Heart right ventricle (tissue), 16 donors: ENCODE measurements at regions of chr15 and their contacts with region 1.

Region 1: DNA sequence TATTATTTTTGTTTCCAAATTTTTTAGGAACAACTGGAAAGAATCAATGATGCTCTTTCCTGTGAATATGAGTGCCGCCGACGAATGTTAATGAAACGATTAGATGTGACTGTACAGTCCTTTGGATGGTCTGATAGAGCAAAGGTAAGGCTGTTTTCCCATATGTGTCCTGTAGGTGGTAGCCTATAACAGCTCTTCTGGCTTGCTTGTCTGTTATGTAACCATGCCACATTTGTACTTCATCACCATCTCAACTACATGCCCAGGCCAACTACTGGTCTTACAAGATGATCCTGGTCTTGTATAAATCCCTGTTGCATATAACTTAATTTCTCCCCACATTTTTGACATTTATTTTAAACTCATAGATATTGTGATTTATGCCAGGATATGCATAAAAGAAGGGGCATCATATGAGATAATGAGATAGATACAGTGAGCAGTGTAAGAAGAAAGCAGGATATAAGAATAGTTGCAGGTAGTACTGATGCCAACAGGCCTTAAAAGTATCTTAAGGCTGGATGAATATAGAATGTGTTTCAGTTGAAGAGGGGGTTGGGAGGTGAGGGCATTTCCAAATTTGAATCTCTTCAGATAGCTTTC is 20.3 kb downstream of the FAM98B start:
- DNase-seq: peak in 1 of 2 donors; percentile 11
- ATAC-seq: peak; percentile 79 to 93 (median 84)
- H3K4me3 ChIP-seq: no peak overlapping the region
- H3K27ac ChIP-seq: no peak overlapping the region
- H3K4me1 ChIP-seq: peaks cover 0 to under 1% (median 0%) of the 10 kb centered on the region in 9 donors
- H3K27me3 ChIP-seq: no peaks in the 10 kb centered on the region
- CTCF ChIP-seq: peak; percentile 16 to 71 (median 65)

Region 2: DNA sequence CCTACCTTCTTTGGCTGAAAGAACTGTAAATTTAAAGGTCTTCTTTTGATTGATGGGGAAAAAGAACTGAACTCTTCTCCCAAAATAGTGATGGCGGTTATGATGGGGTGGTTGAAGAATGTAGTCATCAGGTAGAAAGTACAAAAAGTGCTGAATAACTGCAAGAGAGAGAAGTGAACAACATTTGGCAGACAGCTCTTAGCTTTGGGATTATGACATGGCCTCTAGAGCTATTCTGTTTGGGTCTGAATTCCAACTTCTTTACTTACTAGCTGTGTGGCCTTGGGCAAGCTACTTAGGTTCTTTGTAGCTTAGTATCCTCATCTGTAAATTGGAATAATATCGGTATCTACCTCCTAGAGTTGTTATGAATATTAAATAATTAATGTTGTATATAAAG is 129.9 kb before region 1 on chr15:
- intact Hi-C with region 1: no loop called
- DNase-seq: no peak
- ATAC-seq: no peak
- H3K4me3 ChIP-seq: no peak overlapping the region
- H3K27ac ChIP-seq: no peak overlapping the region
- H3K4me1 ChIP-seq: no peaks in the 10 kb centered on the region
- H3K27me3 ChIP-seq: no peaks in the 10 kb centered on the region
- CTCF ChIP-seq: no peak

Region 3: GRCh38 chr15:38438031-38438986 is 35.9 kb before region 1 on chr15:
- intact Hi-C with region 1: no loop called
- DNase-seq: no peak
- ATAC-seq: no peak
- H3K4me3 ChIP-seq: no peak overlapping the region
- H3K27ac ChIP-seq: no peak overlapping the region
- H3K4me1 ChIP-seq: peaks cover 0 to 9% (median 0%) of the 10 kb centered on the region in 9 donors
- H3K27me3 ChIP-seq: peaks cover 0 to 11% (median 7%) of the 10 kb centered on the region in 7 donors
- CTCF ChIP-seq: no peak

Region 4: DNA sequence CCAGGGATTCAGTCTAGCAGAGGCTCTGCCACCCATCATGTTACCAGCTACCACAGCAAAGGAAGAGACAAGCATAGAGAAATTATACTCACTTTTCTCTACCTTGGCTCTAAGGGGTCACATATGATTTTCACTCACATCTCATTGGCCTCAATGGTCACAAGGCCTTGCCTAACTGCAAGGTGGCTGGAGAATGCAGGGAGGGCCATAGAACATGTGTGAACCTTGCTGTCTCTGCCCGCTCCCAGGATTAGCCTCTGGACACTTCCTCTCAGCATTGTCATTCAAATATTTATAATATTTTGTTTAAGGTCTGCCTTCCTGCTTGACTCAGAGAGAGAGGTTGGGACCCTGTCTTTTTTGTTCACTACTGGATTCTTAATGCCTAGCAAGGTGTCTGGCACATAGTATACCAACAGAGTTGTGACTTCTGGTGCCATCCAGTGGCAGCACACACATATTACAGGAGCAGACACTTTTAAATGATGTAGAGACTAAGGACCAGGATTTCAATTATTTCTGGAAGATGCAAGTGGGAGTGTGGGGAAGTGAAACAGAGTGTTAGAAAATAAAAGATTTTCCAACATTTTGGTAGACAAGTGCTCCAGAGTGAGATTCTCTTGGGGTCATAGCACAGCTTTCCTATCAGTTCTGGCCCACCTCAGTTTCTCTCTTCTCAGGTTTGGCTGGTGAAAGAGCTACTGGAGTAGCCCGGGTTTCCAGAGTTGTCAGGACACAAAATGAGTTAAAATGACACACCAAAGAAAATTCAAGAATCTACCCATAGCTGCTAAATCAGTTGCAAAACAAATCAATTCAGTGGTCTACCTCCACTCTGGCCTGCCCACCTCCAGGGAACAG is 209.4 kb after region 1 on chr15:
- intact Hi-C with region 1: loop called in 5 of 10 experiments (anchors 5 to 10 kb)
- DNase-seq: peak; percentile 18 to 42
- ATAC-seq: peak in 7 of 8 donors; percentile 56 to 81 (median 69)
- H3K4me3 ChIP-seq: no peak overlapping the region
- H3K27ac ChIP-seq: peak overlapping the region in 1 of 10 donors; percentile 66
- H3K4me1 ChIP-seq: peaks cover 0 to 28% (median 0%) of the 10 kb centered on the region in 9 donors
- H3K27me3 ChIP-seq: peaks cover 0 to 7% (median 0%) of the 10 kb centered on the region in 7 donors
- CTCF ChIP-seq: peak; percentile 52 to 81 (median 74)

Region 5: DNA sequence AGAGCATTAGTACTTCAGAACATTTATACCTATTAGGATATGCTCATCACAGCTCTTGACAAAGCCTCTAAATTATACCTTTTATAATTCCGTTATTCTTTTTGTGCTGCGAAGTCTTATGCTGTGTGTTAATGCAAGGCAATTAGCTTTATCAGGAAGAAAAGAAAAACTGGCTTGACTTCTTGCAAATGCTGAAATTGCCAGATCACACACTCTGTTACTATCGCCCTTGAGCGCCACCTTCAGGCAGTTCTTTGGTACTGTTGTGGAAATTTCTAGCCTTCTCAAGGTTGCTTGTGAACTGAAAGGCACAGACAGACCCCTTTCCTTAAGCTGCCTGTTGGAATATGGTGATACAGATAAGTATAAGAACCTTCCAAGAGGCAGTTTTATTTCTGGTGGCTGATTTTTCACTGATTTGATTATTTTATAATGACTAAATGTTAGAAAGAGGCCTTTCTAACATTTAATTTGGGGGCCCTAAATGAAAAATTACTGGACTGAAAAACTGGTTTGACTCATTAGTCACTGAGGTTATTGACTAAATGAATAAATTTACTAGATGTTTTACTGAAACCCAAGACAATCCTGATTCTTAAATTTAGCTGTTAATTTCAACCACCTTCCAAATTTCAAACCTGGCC is 216.6 kb after region 1 on chr15:
- intact Hi-C with region 1: loop called in 5 of 10 experiments (anchors 5 to 10 kb)
- DNase-seq: peak; percentile 21 to 39
- ATAC-seq: peak in 4 of 8 donors; percentile 20 to 50 (median 34)
- H3K4me3 ChIP-seq: no peak overlapping the region
- H3K27ac ChIP-seq: no peak overlapping the region
- H3K4me1 ChIP-seq: peaks cover 0 to 17% (median 0%) of the 10 kb centered on the region in 9 donors
- H3K27me3 ChIP-seq: no peaks in the 10 kb centered on the region
- CTCF ChIP-seq: peak; percentile 59 to 88 (median 78)

Region 6: GRCh38 chr15:38699633-38700230 is 225.5 kb after region 1 on chr15:
- intact Hi-C with region 1: loop called in 2 of 10 experiments (anchors 5 to 10 kb)
- DNase-seq: peak; percentile 11 to 55
- ATAC-seq: peak in 3 of 8 donors; percentile 40 to 50 (median 49)
- H3K4me3 ChIP-seq: no peak overlapping the region
- H3K27ac ChIP-seq: no peak overlapping the region
- H3K4me1 ChIP-seq: peaks cover 0 to 10% (median 0%) of the 10 kb centered on the region in 9 donors
- H3K27me3 ChIP-seq: peaks cover 0 to 15% (median 0%) of the 10 kb centered on the region in 7 donors
- CTCF ChIP-seq: peak; percentile 59 to 93 (median 81)

Region 7: GRCh38 chr15:38817427-38818156 is 343.3 kb after region 1 on chr15:
- intact Hi-C with region 1: no loop called
- DNase-seq: peak; percentile 74 to 81
- ATAC-seq: peak; percentile 85 to 96 (median 94)
- H3K4me3 ChIP-seq: peak overlapping the region in 1 of 10 donors; percentile 17
- H3K27ac ChIP-seq: no peak overlapping the region
- H3K4me1 ChIP-seq: peaks cover 0 to 9% (median 3%) of the 10 kb centered on the region in 9 donors
- H3K27me3 ChIP-seq: no peaks in the 10 kb centered on the region
- CTCF ChIP-seq: peak; percentile 96 to 100 (median 99)